CD4-positive, alpha-beta memory T cell (primary cell): ENCODE measurements at regions of chr6 and their contacts with region 1.

Region 1: DNA sequence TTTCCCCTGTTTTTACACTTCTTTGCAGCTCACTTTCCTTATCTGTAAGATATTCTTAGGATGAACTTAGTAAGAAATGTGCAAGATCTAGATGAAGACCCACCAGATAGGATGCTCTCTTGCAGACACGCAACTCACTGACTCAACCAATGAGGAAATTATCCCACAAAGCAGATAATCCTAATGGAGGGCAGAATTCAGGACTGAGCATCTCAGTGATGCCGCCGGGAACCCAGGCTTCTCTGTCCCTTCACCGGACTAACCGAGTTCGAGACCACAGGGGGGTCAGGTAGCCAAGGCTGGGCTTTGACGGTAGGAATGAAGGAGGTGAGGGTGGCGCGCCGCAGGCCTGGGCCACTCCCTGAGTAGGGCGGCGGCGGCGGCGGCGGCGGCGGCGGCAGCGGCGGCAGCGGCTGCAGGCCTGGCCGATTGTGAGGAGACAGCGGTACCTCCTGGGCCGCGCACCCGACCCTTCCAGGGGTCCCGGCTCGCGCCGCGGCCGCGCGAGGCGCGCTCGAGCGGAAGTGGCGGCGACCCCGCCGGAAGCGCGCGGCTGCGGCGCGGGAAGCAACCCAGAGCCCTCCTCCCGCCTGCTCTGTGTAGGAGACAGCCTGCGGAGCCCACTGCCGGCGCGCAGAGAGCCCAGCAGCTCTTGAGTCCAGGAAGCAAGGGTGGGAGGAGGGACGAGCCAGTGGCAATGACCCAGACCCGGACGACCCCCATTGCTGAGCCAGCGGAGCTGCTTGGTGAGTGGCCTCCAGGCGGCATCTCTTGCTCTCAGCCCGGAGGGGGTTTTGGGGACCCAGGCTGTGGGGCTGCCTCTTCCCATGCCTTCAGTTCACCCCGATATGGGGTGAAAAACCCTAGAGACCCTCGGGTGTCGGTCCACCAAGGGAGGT is at the start of gene KHDC1:
- DNase-seq: peak; percentile 48 to 59 (median 56)
- H3K4me3 ChIP-seq: peak within 1 kb of the TSS; percentile 43 to 82
- H3K4me3 Mint-ChIP-seq: peak within 1 kb of the TSS; percentile 78 to 92 (median 86)
- H3K27ac ChIP-seq: peak within 1 kb of the TSS; percentile 58
- H3K27ac Mint-ChIP-seq: peak within 1 kb of the TSS; percentile 47 to 94 (median 81)
- H3K4me1 ChIP-seq: peaks cover 23% of the 10 kb centered on the region
- H3K4me1 Mint-ChIP-seq: peaks cover 13 to 43% (median 23%) of the 10 kb centered on the region in 4 donors
- H3K27me3 ChIP-seq: no peaks in the 10 kb centered on the region
- H3K27me3 Mint-ChIP-seq: no peaks in the 10 kb centered on the region
- total RNA-seq, gene KHDC1: 1.7 TPM

Region 2: GRCh38 chr6:72622094-72622940 is 640.6 kb before region 1 on chr6:
- CTCF ChIA-PET with region 1: no interaction called
- POLR2A ChIA-PET with region 1: no interaction called
- intact Hi-C with region 1: loop called (anchors 2 kb)
- DNase-seq: peak; percentile 33 to 60 (median 43)
- H3K4me3 ChIP-seq: peak overlapping the region; percentile 30 to 65
- H3K4me3 Mint-ChIP-seq: peak overlapping the region; percentile 85 to 96 (median 91)
- H3K27ac ChIP-seq: no peak overlapping the region
- H3K27ac Mint-ChIP-seq: peak overlapping the region in 4 of 7 donors; percentile 55 to 89 (median 66)
- H3K4me1 ChIP-seq: peaks cover 32% of the 10 kb centered on the region
- H3K4me1 Mint-ChIP-seq: peaks cover 21 to 43% (median 30%) of the 10 kb centered on the region in 4 donors
- H3K27me3 ChIP-seq: no peaks in the 10 kb centered on the region
- H3K27me3 Mint-ChIP-seq: no peaks in the 10 kb centered on the region

Region 3: DNA sequence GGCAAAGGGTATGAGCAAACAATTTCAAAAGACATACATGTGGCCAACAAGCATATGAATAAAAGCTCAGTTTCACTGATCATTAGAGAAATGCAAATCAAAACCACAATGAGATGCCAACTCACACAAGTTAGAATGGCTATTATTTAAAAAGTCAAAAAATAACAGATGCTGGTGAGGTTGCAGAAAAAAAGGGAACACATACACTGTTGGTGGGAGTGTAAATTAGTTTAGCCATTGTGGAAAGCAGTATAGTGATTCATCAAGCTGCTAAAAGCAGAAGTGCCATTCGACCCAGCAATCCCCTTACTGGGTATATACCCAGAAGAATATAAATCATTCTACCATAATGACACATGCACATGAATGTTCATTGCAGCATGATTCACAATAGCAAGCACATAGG is 30.9 kb before region 1 on chr6:
- CTCF ChIA-PET with region 1: no interaction called
- POLR2A ChIA-PET with region 1: no interaction called
- intact Hi-C with region 1: no loop called
- DNase-seq: no peak
- H3K4me3 ChIP-seq: no peak overlapping the region
- H3K4me3 Mint-ChIP-seq: no peak overlapping the region
- H3K27ac ChIP-seq: no peak overlapping the region
- H3K27ac Mint-ChIP-seq: no peak overlapping the region
- H3K4me1 ChIP-seq: no peaks in the 10 kb centered on the region
- H3K4me1 Mint-ChIP-seq: no peaks in the 10 kb centered on the region
- H3K27me3 ChIP-seq: no peaks in the 10 kb centered on the region
- H3K27me3 Mint-ChIP-seq: no peaks in the 10 kb centered on the region

Region 4: DNA sequence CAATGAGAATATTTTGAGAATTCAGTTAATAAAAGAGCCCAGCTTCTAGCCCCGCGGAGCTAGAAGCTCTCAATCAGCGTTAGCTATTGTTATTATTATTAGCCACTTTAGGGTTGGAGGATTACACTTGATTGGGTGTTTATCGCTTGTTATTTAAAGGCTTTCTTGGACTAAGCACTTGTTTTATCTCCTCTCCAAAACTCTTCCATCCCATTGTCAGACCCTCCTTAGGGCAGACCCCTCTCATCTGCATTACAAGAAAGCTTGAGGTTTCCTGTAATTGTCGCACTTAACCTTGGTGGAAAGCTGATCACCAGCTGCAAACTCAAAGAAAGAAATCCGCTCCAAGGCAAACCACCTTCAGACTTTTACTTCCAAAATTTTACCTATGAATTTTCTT is 86.4 kb after region 1 on chr6:
- CTCF ChIA-PET with region 1: no interaction called
- POLR2A ChIA-PET with region 1: no interaction called
- intact Hi-C with region 1: no loop called
- DNase-seq: no peak
- H3K4me3 ChIP-seq: no peak overlapping the region
- H3K4me3 Mint-ChIP-seq: no peak overlapping the region
- H3K27ac ChIP-seq: no peak overlapping the region
- H3K27ac Mint-ChIP-seq: peak overlapping the region in 1 of 7 donors; percentile 26
- H3K4me1 ChIP-seq: no peaks in the 10 kb centered on the region
- H3K4me1 Mint-ChIP-seq: no peaks in the 10 kb centered on the region
- H3K27me3 ChIP-seq: peaks cover 17% of the 10 kb centered on the region
- H3K27me3 Mint-ChIP-seq: peaks cover 19 to 21% of the 10 kb centered on the region in 2 donors

Region 5: GRCh38 chr6:73451223-73452107 is 188.5 kb after region 1 on chr6:
- CTCF ChIA-PET with region 1: no interaction called
- POLR2A ChIA-PET with region 1: interaction called, 3 read pairs
- intact Hi-C with region 1: loop called (anchors 5 kb)
- DNase-seq: peak; percentile 41 to 64 (median 49)
- H3K4me3 ChIP-seq: peak overlapping the region; percentile 97 to 98
- H3K4me3 Mint-ChIP-seq: peak overlapping the region; percentile 90 to 99 (median 97)
- H3K27ac ChIP-seq: peak overlapping the region; percentile 92
- H3K27ac Mint-ChIP-seq: peak overlapping the region; percentile 88 to 97 (median 92)
- H3K4me1 ChIP-seq: peaks cover 32% of the 10 kb centered on the region
- H3K4me1 Mint-ChIP-seq: peaks cover 14 to 44% (median 24%) of the 10 kb centered on the region in 4 donors
- H3K27me3 ChIP-seq: no peaks in the 10 kb centered on the region
- H3K27me3 Mint-ChIP-seq: no peaks in the 10 kb centered on the region